Natural killer cell (primary cell): ENCODE measurements at regions of chr10 and their contacts with region 1.

Region 1: GRCh38 chr10:110610308-110610774 is 33.8 kb upstream of the RBM20 start:
- DNase-seq: peak; percentile 26 to 79
- ATAC-seq: peak; percentile 77 to 83 (median 83)
- H3K4me3 ChIP-seq: no peak overlapping the region
- H3K4me3 Mint-ChIP-seq: no peak overlapping the region
- H3K27ac ChIP-seq: no peak overlapping the region
- H3K27ac Mint-ChIP-seq: no peak overlapping the region
- H3K4me1 ChIP-seq: no peaks in the 10 kb centered on the region
- H3K4me1 Mint-ChIP-seq: peaks cover 4 to 8% of the 10 kb centered on the region in 2 donors
- H3K27me3 ChIP-seq: no peaks in the 10 kb centered on the region
- H3K27me3 Mint-ChIP-seq: no peaks in the 10 kb centered on the region
- CTCF ChIP-seq: peak; percentile 78

Region 2: DNA sequence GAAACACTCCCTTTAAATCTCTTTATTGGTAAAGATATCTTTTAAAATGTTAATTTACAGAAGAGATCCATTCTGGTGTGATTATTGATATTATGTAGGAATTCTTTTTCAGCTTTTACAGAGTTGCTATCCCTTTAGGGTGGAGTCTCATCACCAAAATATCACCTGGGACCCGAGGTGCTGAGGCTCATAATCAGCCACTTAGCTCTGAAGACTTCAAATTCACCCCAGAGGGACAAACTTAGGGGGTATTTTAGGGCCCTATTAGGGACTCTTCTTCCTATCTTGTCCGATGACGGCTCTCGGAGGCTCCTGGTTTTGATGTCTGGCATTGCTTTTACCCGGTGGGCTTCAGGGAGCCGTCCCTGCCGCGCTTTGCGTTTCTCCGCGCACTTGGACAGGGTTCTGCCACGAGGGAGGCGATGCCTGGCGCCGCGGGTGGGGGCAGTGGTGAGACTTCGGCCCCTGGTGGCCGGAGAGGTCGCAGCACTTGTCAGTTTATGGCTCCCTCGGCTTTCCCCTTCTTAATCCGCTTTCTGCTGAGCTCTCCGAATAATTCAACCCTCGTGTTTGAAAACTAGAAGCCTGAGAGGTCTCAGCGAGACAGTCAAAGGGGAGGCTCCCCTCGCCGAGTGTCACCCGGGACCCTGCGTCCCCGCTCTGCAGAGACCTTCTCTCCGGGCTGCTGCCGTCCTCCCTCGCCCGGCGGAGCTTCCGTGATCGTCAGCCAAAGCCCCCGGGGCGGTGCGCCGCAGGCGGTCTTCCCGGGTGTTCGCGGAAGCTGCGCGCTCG is 61.6 kb after region 1 on chr10:
- intact Hi-C with region 1: loop called (anchors 2 kb)
- DNase-seq: peak; percentile 64 to 70
- ATAC-seq: peak; percentile 93 to 95 (median 95)
- H3K4me3 ChIP-seq: peak overlapping the region; percentile 59
- H3K4me3 Mint-ChIP-seq: peak overlapping the region; percentile 96
- H3K27ac ChIP-seq: peak overlapping the region; percentile 76
- H3K27ac Mint-ChIP-seq: peak overlapping the region; percentile 83 to 95
- H3K4me1 ChIP-seq: peaks cover 4% of the 10 kb centered on the region
- H3K4me1 Mint-ChIP-seq: peaks cover 10 to 15% of the 10 kb centered on the region in 2 donors
- H3K27me3 ChIP-seq: no peaks in the 10 kb centered on the region
- H3K27me3 Mint-ChIP-seq: peaks cover 13 to 21% of the 10 kb centered on the region in 2 donors
- CTCF ChIP-seq: peak; percentile 83

Region 3: DNA sequence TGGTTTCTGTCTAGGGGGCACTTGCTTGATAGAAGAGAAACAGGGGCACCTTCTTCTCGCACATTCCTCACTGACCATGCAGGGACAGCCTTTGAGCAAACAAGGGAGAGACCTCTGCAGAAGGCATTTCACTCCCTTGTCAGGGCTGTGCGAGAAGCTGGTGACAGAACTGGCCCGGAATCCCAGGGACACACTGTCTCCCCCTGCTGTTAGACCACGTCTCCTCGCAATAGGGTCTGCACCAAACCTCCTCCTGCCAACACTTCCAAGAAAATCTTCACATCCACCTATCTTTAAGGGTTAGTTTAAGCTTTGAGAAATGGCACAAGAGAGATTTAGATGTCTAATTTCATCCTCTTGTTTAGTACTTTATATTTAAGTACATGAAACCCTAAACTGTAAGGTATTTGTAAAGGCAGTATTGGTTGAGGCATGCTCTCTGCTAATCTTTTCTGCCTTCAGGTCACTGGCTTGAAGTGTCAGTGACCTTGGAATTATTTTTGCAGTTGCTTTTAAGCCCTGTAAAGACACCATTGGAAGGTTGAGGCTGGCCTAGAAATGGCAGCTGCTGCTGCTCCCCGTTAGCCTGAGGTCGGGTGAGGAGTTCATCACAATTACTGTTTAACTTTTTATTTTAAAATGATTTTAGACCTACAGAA is 70.8 kb after region 1 on chr10:
- intact Hi-C with region 1: loop called (anchors 1 kb)
- DNase-seq: peak in 1 of 2 donors; percentile 52
- ATAC-seq: peak; percentile 53 to 62 (median 59)
- H3K4me3 ChIP-seq: no peak overlapping the region
- H3K4me3 Mint-ChIP-seq: no peak overlapping the region
- H3K27ac ChIP-seq: no peak overlapping the region
- H3K27ac Mint-ChIP-seq: no peak overlapping the region
- H3K4me1 ChIP-seq: no peaks in the 10 kb centered on the region
- H3K4me1 Mint-ChIP-seq: no peaks in the 10 kb centered on the region
- H3K27me3 ChIP-seq: peaks cover 2% of the 10 kb centered on the region
- H3K27me3 Mint-ChIP-seq: peaks cover 15 to 53% of the 10 kb centered on the region in 2 donors
- CTCF ChIP-seq: peak; percentile 22

Region 4: GRCh38 chr10:110893559-110894179 is 283.3 kb after region 1 on chr10:
- intact Hi-C with region 1: loop called (anchors 1 kb)
- DNase-seq: peak in 1 of 2 donors; percentile 75
- ATAC-seq: peak; percentile 75 to 91 (median 89)
- H3K4me3 ChIP-seq: no peak overlapping the region
- H3K4me3 Mint-ChIP-seq: no peak overlapping the region
- H3K27ac ChIP-seq: no peak overlapping the region
- H3K27ac Mint-ChIP-seq: no peak overlapping the region
- H3K4me1 ChIP-seq: no peaks in the 10 kb centered on the region
- H3K4me1 Mint-ChIP-seq: peaks cover 8 to 21% of the 10 kb centered on the region in 2 donors
- H3K27me3 ChIP-seq: no peaks in the 10 kb centered on the region
- H3K27me3 Mint-ChIP-seq: no peaks in the 10 kb centered on the region
- CTCF ChIP-seq: peak; percentile 69

Region 5: DNA sequence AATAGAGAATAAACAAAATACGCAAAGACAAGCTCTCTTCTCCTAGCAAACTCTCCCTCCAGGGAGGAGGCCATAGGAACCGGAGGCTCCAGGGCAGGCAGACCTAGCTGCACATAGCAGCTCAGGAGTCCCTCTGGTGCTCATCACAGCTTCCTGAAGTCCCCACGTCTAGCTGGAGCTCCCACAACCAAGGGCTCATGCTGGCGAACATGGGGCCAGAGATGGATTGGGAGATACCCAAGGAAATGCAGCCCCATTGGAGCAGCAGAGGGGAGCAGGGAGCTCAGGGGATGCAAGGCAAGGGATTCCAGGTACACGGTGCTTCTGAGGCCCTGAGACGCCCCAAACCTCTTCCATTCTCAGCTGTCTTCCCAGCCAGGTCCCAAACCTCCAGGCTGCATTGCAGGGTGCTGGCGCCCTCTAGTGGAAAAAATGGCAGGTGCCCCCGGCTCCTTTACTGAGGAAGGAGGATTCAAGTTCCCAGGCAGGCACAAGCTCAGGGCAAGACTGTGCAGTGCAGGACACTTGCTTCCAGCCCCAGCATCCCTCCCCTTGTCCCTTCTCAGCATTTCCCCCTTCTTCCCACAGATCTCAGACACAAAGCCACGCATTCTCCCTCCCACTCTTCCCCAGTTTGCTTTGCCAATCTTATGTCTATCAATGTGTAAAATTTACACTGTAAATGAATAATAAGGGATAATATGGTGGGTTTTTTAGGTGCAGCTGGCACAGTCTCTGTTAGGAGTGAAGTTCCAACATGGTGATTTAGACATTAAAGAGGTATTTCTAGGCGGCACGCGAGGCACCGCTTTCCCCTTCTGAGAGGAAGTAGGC is 1527.0 kb after region 1 on chr10:
- intact Hi-C with region 1: loop called (anchors 10 kb)
- DNase-seq: peak; percentile 42 to 64
- ATAC-seq: peak in 2 of 3 donors; percentile 49 to 55
- H3K4me3 ChIP-seq: no peak overlapping the region
- H3K4me3 Mint-ChIP-seq: no peak overlapping the region
- H3K27ac ChIP-seq: no peak overlapping the region
- H3K27ac Mint-ChIP-seq: no peak overlapping the region
- H3K4me1 ChIP-seq: no peaks in the 10 kb centered on the region
- H3K4me1 Mint-ChIP-seq: peaks cover 0 to 10% of the 10 kb centered on the region in 2 donors
- H3K27me3 ChIP-seq: no peaks in the 10 kb centered on the region
- H3K27me3 Mint-ChIP-seq: peaks cover 0 to 4% of the 10 kb centered on the region in 2 donors
- CTCF ChIP-seq: peak; percentile 69